Left cardiac atrium (tissue), 4 donors: ENCODE measurements at regions of chr7 and their contacts with region 1.

Region 1: DNA sequence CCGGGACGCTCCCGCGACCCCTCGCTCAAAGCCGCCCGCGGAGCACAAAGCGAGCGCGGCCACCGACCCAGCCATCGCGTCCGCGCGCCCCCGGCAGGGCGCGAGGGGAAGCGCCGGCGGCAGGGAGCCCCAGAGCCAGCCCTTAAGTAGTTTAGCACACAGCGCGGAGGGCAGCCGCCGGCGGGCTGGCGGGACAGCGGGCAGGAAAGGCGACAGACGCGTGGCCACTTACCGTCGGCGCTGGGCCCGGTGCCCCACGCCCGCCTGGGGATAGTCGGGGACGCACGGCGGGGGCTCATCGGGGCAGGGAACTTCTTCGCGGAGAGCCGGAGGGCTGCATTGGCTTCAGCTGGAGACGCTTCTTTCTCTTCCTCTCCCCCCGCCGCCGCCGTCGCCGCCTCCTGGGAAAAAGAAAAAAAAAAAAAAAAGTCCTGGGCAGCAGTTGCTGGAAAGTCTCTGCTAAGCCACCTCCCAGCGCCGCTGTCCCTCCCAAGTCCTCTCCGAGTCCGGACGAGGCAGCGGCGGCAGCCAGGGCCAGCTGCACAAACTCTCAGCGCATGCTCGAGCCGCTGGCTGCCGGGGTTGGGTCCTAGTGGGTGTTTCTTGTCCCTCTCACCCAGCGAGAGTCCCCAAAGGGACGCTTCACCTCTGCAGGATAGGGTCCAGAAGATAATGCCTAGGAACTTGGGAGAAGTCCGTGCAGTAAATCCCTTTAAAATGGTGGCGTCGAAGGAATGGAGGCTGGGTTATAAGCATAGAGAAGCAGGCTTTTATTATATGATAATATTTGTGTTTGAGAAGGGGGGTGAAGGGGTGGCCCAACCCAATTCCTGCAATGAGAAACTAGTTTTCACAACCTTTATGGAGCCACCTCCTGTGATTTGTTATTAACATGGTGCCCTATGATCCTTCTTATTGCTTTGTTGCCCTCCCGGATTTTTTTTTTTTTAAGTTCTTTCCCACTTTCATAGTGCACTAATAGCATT is at the start of gene TSPAN12:
- DNase-seq: peak; percentile 92
- ATAC-seq: peak; percentile 93 to 96
- total RNA-seq, gene TSPAN12: 46.9 to 50.5 TPM

Region 2: GRCh38 chr7:120805636-120806388 is 52.1 kb before region 1 on chr7:
- intact Hi-C with region 1: loop called (anchors 2 to 10 kb)
- DNase-seq: peak; percentile 44
- ATAC-seq: peak; percentile 53 to 61

Region 3: GRCh38 chr7:120938991-120939744 is 81.3 kb after region 1 on chr7:
- intact Hi-C with region 1: loop called in 1 of 2 experiments (anchors 5 kb)
- DNase-seq: no peak
- ATAC-seq: no peak

Region 4: DNA sequence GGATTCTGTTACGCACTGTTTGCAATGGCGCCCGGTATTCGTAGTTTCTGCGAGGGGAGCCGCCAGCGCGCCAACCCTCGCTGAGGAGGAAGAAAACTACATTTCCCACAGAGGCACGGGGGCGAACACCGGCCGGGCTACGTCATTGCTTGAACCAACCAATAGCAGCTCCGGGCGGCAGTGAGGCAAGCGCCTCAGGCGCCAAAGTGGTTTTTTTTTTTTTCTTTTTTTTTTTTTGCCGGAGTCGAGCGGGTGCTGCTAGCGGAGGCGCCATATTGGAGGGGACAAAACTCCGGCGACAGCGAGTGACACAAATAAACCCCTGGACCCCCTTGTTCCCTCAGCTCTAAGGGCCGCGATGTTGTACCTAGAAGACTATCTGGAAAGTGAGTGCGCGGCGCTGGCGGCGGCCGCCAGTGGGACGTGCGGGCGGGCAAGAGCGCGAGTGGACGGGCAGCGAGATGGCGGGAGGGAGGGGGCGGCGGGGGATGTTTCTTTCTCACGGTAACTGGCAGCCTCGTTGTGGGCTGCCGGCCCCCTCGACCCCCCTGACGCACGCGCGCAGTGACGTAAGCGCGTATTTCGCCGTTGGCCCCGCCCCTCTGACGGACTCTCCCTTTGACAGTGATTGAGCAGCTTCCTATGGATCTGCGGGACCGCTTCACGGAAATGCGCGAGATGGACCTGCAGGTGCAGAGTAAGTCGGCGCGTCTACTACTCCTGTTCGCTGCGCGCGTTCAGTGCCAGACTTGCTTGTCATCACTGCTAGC is 92.8 kb after region 1 on chr7 and contains the start of gene ING3:
- intact Hi-C with region 1: loop called in 1 of 2 experiments (anchors 2 kb)
- DNase-seq: peak; percentile 97
- ATAC-seq: peak; percentile 97 to 99
- total RNA-seq, gene ING3: 12.2 to 13.8 TPM